ENCODE measurements at regions of chr5 and their contacts with region 1.

Region 1: GRCh38 chr5:180467041-180467440 is 27.1 kb upstream of the CNOT6 start:
- DNase-seq: no peak
- ATAC-seq: no peak

Region 2: GRCh38 chr5:180296771-180297170 is 170.3 kb before region 1 on chr5:
- intact Hi-C with region 1: loop called (anchors 5 kb)
- DNase-seq: no peak
- ATAC-seq: no peak